Activated B cell treated with CpG ODN at 0.5 μM for 24 hours (primary cell): ENCODE measurements at regions of chr16 and their contacts with region 1.

Region 1: DNA sequence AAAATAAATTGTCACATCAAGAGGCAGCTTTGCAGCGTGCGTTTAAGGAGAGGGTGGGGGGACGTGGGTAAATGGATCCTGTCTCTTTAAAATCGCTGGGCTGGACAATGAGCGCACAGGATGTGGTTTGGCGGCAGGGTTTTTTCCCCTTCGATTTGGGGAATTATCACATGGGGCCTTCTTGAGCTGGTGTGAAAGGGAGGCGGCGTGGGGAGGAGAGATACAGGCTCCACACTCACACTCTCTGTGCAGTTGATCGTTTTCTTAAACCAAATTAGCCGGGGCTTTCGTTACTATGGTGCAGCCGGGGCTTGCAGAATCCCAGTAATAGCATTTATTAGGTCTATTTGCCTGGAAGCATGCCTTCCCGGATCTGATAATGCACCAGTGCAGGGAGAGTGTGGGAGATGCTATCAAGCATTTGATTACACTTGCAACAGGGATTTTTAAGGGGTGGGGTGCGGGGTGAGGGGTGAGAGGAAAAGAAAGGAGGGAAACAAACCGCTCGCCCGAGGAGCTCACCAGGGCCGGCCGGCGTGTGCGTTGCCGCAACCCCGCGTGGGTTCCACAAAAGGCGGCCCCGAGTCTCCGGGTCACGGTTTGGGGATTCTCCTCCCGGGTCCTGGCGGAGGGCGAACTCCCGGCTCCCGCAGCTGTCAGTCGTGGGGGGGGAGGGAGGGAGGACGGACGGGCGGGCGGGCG is 58.9 kb upstream of the GSE1 start:
- DNase-seq: peak; percentile 45
- ATAC-seq: peak; percentile 62
- H3K4me3 Mint-ChIP-seq: peak overlapping the region; percentile 96
- H3K27ac Mint-ChIP-seq: peak overlapping the region; percentile 97
- H3K4me1 Mint-ChIP-seq: peaks cover 39% of the 10 kb centered on the region
- H3K27me3 Mint-ChIP-seq: no peaks in the 10 kb centered on the region
- CTCF ChIP-seq: no peak

Region 2: GRCh38 chr16:83807710-83808572 is 1746.3 kb before region 1 on chr16 and contains the start of gene HSBP1:
- CTCF ChIA-PET with region 1: no interaction called
- POLR2A ChIA-PET with region 1: no interaction called
- intact Hi-C with region 1: loop called (anchors 10 kb)
- DNase-seq: peak; percentile 87
- ATAC-seq: peak; percentile 95
- H3K4me3 Mint-ChIP-seq: peak within 1 kb of the TSS; percentile 97
- H3K27ac Mint-ChIP-seq: peak within 1 kb of the TSS; percentile 94
- H3K4me1 Mint-ChIP-seq: peaks cover 64% of the 10 kb centered on the region
- H3K27me3 Mint-ChIP-seq: no peaks in the 10 kb centered on the region
- CTCF ChIP-seq: no peak
- total RNA-seq, gene HSBP1: 49.8 and 54.0 TPM in 2 replicates

Region 3: GRCh38 chr16:85202631-85203461 is 351.4 kb before region 1 on chr16:
- CTCF ChIA-PET with region 1: no interaction called
- POLR2A ChIA-PET with region 1: no interaction called
- intact Hi-C with region 1: no loop called
- DNase-seq: no peak
- ATAC-seq: no peak
- H3K4me3 Mint-ChIP-seq: no peak overlapping the region
- H3K27ac Mint-ChIP-seq: no peak overlapping the region
- H3K4me1 Mint-ChIP-seq: no peaks in the 10 kb centered on the region
- H3K27me3 Mint-ChIP-seq: peaks cover 5% of the 10 kb centered on the region
- CTCF ChIP-seq: no peak

Region 4: GRCh38 chr16:85420501-85421337 is 133.5 kb before region 1 on chr16:
- CTCF ChIA-PET with region 1: interaction called, 9 read pairs
- POLR2A ChIA-PET with region 1: interaction called, 3 read pairs
- intact Hi-C with region 1: loop called (anchors 2 kb)
- DNase-seq: peak; percentile 80
- ATAC-seq: peak; percentile 78
- H3K4me3 Mint-ChIP-seq: no peak overlapping the region
- H3K27ac Mint-ChIP-seq: no peak overlapping the region
- H3K4me1 Mint-ChIP-seq: no peaks in the 10 kb centered on the region
- H3K27me3 Mint-ChIP-seq: peaks cover 14% of the 10 kb centered on the region
- CTCF ChIP-seq: peak; percentile 99

Region 5: GRCh38 chr16:85569615-85570212 is 15.5 kb after region 1 on chr16:
- CTCF ChIA-PET with region 1: interaction called, 4 read pairs
- POLR2A ChIA-PET with region 1: interaction called, 84 read pairs
- intact Hi-C with region 1: loop called (anchors 1 kb)
- DNase-seq: no peak
- ATAC-seq: peak; percentile 53
- H3K4me3 Mint-ChIP-seq: peak overlapping the region; percentile 70
- H3K27ac Mint-ChIP-seq: peak overlapping the region; percentile 82
- H3K4me1 Mint-ChIP-seq: peaks cover 74% of the 10 kb centered on the region
- H3K27me3 Mint-ChIP-seq: no peaks in the 10 kb centered on the region
- CTCF ChIP-seq: no peak

Region 6: DNA sequence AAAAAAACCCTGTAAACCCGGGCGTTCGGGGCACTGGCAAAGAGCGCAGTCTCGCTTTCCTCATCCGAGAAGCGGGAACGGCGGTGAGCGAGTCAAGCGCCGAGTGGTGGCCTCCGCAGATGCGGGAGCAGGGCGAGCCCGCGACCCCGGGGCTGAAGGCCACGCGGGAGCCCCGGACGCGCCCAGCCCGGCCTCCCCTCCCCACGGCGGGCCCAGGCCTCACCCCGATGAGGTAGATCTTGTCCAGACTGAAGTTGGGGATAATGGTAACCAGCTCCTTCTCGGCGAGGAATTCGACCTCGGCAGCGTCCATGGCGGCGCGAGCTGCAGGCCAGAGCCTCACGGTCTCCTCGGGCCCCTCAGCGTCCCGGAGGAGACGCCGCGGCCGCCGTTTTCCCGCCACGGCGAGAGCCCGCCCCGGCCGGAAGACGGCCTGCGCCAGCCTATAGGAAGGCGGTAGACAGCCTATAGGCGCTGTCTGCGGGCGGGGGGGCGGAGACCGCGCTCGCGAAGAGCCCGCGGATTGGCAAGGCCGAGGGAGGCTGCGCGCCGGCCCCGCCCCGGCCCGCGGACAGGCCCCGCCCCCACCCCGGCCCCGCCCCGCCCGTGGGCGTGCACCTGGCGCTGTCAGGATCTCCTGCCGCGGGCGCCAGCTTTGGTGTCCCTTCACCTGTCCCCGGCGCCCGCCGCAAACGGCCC is 134.5 kb after region 1 on chr16 and contains the start of gene GINS2:
- CTCF ChIA-PET with region 1: no interaction called
- POLR2A ChIA-PET with region 1: no interaction called
- intact Hi-C with region 1: loop called (anchors 1 kb)
- DNase-seq: peak; percentile 78
- ATAC-seq: peak; percentile 100
- H3K4me3 Mint-ChIP-seq: peak within 1 kb of the TSS; percentile 78
- H3K27ac Mint-ChIP-seq: no peak within 1 kb of the TSS
- H3K4me1 Mint-ChIP-seq: peaks cover 24% of the 10 kb centered on the region
- H3K27me3 Mint-ChIP-seq: no peaks in the 10 kb centered on the region
- CTCF ChIP-seq: no peak
- total RNA-seq, gene GINS2: 6.0 and 6.8 TPM in 2 replicates

Region 7: GRCh38 chr16:85935974-85936760 is 381.9 kb after region 1 on chr16:
- CTCF ChIA-PET with region 1: no interaction called
- POLR2A ChIA-PET with region 1: interaction called, 8 read pairs
- intact Hi-C with region 1: loop called (anchors 10 kb)
- DNase-seq: peak; percentile 66
- ATAC-seq: peak; percentile 78
- H3K4me3 Mint-ChIP-seq: peak overlapping the region; percentile 75
- H3K27ac Mint-ChIP-seq: peak overlapping the region; percentile 98
- H3K4me1 Mint-ChIP-seq: peaks cover 90% of the 10 kb centered on the region
- H3K27me3 Mint-ChIP-seq: no peaks in the 10 kb centered on the region
- CTCF ChIP-seq: no peak

Region 8: GRCh38 chr16:87492721-87493607 is 1938.7 kb after region 1 on chr16 and contains the start of gene ZCCHC14:
- CTCF ChIA-PET with region 1: no interaction called
- POLR2A ChIA-PET with region 1: no interaction called
- intact Hi-C with region 1: loop called (anchors 10 kb)
- DNase-seq: peak; percentile 89
- ATAC-seq: peak; percentile 91
- H3K4me3 Mint-ChIP-seq: peak within 1 kb of the TSS; percentile 82
- H3K27ac Mint-ChIP-seq: peak within 1 kb of the TSS; percentile 59
- H3K4me1 Mint-ChIP-seq: peaks cover 46% of the 10 kb centered on the region
- H3K27me3 Mint-ChIP-seq: peaks cover 22% of the 10 kb centered on the region
- CTCF ChIP-seq: no peak
- total RNA-seq, gene ZCCHC14: 3.4 and 3.8 TPM in 2 replicates